Ascending aorta (tissue), 2 donors: ENCODE measurements at regions of chr9 and their contacts with region 1.

Region 1: GRCh38 chr9:88388172-88388885 is at the start of gene SPIN1:
- DNase-seq: peak in 1 of 2 donors; percentile 83
- H3K4me3 ChIP-seq: peak within 1 kb of the TSS; percentile 99 to 100
- H3K27ac ChIP-seq: peak within 1 kb of the TSS; percentile 88 to 95
- H3K4me1 ChIP-seq: peaks cover 0 to 11% of the 10 kb centered on the region in 2 donors
- H3K27me3 ChIP-seq: no peaks in the 10 kb centered on the region
- CTCF ChIP-seq: peak in 1 of 3 experiments; percentile 78
- total RNA-seq, gene SPIN1: 11.6 TPM

Region 2: GRCh38 chr9:87516222-87516925 is 872.0 kb before region 1 on chr9:
- intact Hi-C with region 1: no loop called
- DNase-seq: peak; percentile 46 to 79
- H3K4me3 ChIP-seq: no peak overlapping the region
- H3K27ac ChIP-seq: peak overlapping the region in 1 of 2 donors; percentile 22
- H3K4me1 ChIP-seq: no peaks in the 10 kb centered on the region
- H3K27me3 ChIP-seq: no peaks in the 10 kb centered on the region
- CTCF ChIP-seq: no peak

Region 3: GRCh38 chr9:88197781-88198340 is 190.5 kb before region 1 on chr9:
- intact Hi-C with region 1: loop called (anchors 5 kb)
- DNase-seq: no peak
- H3K4me3 ChIP-seq: peak overlapping the region; percentile 26 to 53
- H3K27ac ChIP-seq: peak overlapping the region in 1 of 2 donors; percentile 45
- H3K4me1 ChIP-seq: peaks cover 0 to 6% of the 10 kb centered on the region in 2 donors
- H3K27me3 ChIP-seq: no peaks in the 10 kb centered on the region
- CTCF ChIP-seq: no peak

Region 4: DNA sequence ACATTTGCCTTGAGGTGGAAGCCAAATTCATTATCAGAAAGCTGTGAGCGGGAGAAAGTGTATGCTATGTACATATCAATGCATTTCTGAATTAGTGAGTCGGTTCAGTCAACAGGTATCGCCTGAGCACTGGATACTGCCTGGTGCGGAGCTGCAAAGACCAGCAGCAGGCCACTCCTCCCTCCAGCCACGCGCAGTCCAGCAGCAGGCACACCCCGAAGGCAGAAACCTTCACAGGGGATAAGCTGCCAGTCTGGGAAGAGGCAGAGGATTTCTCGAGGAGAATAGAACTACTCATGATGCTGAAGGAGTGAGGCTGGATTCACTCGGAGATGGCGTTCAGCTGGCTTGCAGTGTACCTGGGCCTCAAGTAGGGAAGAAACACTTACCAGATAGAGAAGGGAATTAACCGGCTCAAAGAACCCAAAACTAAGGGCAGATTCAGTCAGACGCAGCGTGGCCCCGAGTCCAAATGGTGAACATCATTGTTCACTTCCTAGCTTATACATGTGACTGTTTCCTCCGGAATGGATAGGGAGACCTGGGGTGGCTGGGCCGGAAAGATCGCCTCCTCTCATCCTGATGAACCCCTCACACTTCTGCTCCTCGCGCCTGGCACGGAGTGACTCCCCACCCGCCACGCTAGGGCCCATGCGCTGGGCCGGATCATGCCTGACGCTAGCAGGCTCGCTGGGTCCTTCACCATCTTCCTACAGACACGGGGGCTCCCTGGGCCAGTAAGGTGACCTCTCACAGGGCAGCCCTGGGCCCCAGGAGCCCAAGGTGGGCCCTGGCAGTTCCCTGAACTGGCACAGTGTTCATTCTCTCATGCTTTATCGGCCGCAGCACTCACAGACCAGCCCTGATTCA is 172.0 kb before region 1 on chr9:
- intact Hi-C with region 1: no loop called
- DNase-seq: no peak
- H3K4me3 ChIP-seq: no peak overlapping the region
- H3K27ac ChIP-seq: no peak overlapping the region
- H3K4me1 ChIP-seq: no peaks in the 10 kb centered on the region
- H3K27me3 ChIP-seq: no peaks in the 10 kb centered on the region
- CTCF ChIP-seq: no peak

Region 5: GRCh38 chr9:88339317-88339716 is 49.0 kb before region 1 on chr9:
- intact Hi-C with region 1: no loop called
- DNase-seq: no peak
- H3K4me3 ChIP-seq: no peak overlapping the region
- H3K27ac ChIP-seq: no peak overlapping the region
- H3K4me1 ChIP-seq: no peaks in the 10 kb centered on the region
- H3K27me3 ChIP-seq: no peaks in the 10 kb centered on the region
- CTCF ChIP-seq: no peak

Region 6: DNA sequence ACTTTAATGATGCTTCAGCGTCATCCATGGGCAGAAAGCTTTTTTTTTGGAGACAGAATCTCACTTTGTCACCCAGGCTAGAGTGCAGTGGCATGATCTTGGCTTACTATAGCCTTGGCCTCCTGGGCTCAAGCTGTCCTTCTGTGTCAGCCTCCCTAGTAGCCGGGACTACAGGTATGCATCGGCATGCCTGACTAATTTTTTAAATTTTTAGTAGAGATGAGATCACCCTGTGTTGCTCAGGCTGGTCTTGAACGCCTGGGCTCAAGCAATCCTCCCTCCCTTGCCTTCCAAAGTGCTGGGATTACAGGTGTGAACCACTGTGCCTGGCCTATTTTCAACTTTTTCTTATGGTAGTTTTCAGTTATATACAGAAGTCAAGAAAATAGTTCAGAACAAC is 23.2 kb after region 1 on chr9:
- intact Hi-C with region 1: no loop called
- DNase-seq: no peak
- H3K4me3 ChIP-seq: no peak overlapping the region
- H3K27ac ChIP-seq: no peak overlapping the region
- H3K4me1 ChIP-seq: no peaks in the 10 kb centered on the region
- H3K27me3 ChIP-seq: no peaks in the 10 kb centered on the region
- CTCF ChIP-seq: no peak

Region 7: DNA sequence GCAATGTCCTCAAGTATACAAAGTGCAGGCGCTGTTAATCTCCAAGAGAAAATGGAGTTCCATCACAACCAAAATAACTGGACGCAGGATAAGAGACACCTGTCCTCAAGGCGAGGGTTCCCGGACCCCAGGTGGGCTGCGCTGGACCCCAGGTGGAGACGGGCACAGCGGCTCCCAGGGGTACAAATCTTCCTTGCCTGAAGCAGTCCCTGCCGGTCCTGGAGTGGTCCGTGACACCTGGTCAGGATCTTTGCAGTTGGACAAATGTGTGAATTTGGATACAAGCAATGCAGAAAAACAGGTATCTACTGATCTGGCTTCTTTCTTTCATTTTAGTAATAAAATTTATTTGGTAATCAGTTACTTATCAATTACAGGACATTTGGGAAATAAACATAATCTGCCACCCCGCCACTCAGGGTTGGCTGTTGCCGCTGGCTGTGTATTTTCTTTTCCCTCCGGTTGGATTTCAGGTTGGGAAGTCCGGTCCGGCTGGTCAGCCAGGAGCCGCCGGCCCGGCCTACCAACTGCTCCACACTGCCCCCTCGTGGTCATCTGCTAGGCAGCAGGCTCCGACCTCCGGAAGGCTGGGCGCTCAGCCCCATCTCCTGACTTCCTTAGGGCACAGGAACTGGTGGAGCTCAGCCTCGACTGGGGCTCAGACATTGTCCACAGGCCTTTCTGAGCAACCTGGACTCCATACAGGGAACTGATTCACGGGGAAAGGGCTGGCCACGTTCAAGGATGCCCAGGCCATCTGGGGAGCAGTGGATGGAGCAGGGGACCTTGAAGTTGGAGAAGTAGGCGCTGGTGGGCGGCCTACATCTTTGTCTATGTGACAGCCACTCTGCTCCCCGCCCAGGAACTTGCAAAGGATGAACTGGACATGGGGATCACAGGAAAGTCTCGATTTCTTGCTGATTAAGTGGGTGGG is 190.1 kb after region 1 on chr9:
- intact Hi-C with region 1: loop called (anchors 2 kb)
- DNase-seq: peak in 1 of 2 donors; percentile 86
- H3K4me3 ChIP-seq: no peak overlapping the region
- H3K27ac ChIP-seq: no peak overlapping the region
- H3K4me1 ChIP-seq: no peaks in the 10 kb centered on the region
- H3K27me3 ChIP-seq: no peaks in the 10 kb centered on the region
- CTCF ChIP-seq: peak; percentile 84 to 99 (median 98)

Region 8: GRCh38 chr9:89000973-89001916 is 612.9 kb after region 1 on chr9:
- intact Hi-C with region 1: loop called (anchors 5 kb)
- DNase-seq: peak; percentile 46 to 94
- H3K4me3 ChIP-seq: peak overlapping the region; percentile 33 to 39
- H3K27ac ChIP-seq: peak overlapping the region; percentile 72 to 75
- H3K4me1 ChIP-seq: peaks cover 18 to 44% of the 10 kb centered on the region in 2 donors
- H3K27me3 ChIP-seq: no peaks in the 10 kb centered on the region
- CTCF ChIP-seq: peak; percentile 76 to 87 (median 76)